ENCODE measurements at regions of chr17 and their contacts with region 1.

Region 1: GRCh38 chr17:48505787-48506645 is 24.8 kb downstream of the HOXB1 start:
- DNase-seq: peak; percentile 87 to 97 (median 96)
- H3K4me3 ChIP-seq: no peak overlapping the region
- H3K27ac ChIP-seq: no peak overlapping the region
- H3K4me1 ChIP-seq: peaks cover 0 to 12% (median 11%) of the 10 kb centered on the region in 4 experiments
- H3K27me3 ChIP-seq: no peaks in the 10 kb centered on the region

Region 2: GRCh38 chr17:48357779-48358602 is 148.0 kb before region 1 on chr17:
- CTCF ChIA-PET with region 1: no interaction called
- POLR2A ChIA-PET with region 1: no interaction called
- DNase-seq: peak; percentile 54 to 91 (median 87)
- H3K4me3 ChIP-seq: no peak overlapping the region
- H3K27ac ChIP-seq: peak overlapping the region in 1 of 2 experiments; percentile 64
- H3K4me1 ChIP-seq: peaks cover 0 to 12% (median 8%) of the 10 kb centered on the region in 4 experiments
- H3K27me3 ChIP-seq: no peaks in the 10 kb centered on the region

Region 3: DNA sequence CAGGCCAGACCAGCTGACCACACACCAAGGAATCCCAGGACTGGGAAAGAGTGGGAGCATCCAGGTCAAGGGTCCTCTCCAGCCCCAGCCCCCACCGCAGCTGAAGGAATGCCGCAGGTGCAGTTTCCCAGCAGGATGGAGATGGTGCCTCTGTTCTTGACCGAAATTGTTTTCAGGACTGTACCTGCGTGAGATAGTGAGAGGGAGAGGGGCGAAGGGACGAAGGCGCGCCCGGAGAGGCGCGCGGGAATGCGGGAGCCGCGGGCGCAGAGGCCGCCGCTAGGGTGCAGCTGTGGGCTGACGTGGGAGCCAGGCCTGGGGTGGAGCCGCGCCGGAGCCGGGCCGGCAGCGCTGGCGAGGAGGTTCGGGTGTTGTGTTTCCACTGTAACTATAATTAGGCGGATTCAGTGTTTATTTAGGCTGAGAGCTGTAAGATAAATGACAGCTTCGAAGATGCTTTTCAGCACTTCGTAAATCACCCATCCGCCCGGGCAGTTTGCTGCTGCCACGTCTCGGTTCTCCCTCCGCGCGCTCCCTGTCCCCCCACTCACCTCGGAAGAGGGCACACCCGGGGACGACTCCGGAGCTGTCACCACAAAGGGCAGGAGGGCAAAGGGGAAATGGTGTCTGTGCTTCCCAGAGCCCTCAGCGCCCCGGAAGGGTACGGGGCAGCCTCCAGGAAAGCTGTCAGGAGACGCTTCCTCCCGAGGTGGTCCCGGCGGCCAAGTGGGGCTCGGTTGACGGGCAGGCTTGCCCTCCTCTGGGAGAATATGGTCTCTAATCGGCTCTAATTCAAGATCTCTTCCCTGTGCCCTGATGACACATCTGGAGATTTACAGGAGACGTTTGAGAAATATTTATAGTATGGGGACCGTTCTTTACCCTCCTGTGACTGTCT is 13.4 kb before region 1 on chr17:
- CTCF ChIA-PET with region 1: interaction called, 19 read pairs
- POLR2A ChIA-PET with region 1: interaction called, 3 read pairs
- DNase-seq: peak; percentile 52 to 67 (median 58)
- H3K4me3 ChIP-seq: peak overlapping the region; percentile 2 to 79 (median 51)
- H3K27ac ChIP-seq: peak overlapping the region in 1 of 2 experiments; percentile 58
- H3K4me1 ChIP-seq: peaks cover 4 to 54% (median 46%) of the 10 kb centered on the region in 4 experiments
- H3K27me3 ChIP-seq: no peaks in the 10 kb centered on the region